Endothelial cell of umbilical vein (primary cell): ENCODE measurements at regions of chr10 and their contacts with region 1.

Region 1: DNA sequence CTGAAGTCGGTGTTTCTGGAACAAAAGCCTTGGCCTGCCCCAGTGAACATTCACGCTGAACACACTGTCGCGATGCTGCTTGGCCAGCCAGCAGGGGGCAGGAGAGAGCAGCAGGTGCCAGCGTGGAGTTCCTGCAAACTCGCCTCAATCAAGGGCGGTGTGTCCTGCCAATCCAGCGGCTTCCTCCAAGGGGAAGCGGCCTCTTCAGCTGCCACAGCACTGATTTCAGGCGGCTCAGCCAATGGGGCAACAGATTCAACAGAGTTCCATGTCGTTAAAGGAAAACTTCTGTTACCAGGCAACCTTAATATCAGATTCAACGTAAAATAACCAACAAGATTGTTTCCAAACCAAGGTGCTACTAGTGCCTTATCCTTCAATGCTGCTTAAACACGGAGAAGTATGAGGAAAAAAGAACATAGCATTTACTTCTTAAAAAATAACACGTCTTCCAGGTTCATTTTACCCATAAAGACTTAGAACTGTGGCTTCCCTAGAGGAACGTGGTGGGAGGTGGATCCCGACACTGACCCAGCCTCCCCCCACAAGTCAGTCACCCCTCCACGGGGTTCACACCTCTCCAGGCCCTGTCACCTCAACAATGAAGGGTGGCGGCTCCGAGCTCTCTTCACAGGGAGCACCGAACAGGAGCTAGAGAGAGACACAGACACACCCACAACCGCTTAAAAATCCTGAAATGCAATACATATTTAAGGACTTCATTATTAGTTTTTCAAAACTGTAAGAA is 178.2 kb downstream of the DIP2C start:
- DNase-seq: peak; percentile 96
- H3K4me3 ChIP-seq: no peak overlapping the region
- H3K27ac ChIP-seq: no peak overlapping the region
- H3K4me1 ChIP-seq: peaks cover 3% of the 10 kb centered on the region
- H3K27me3 ChIP-seq: no peaks in the 10 kb centered on the region
- CTCF ChIP-seq: peak; percentile 98 to 99
- POLR2A ChIP-seq: no peak

Region 2: DNA sequence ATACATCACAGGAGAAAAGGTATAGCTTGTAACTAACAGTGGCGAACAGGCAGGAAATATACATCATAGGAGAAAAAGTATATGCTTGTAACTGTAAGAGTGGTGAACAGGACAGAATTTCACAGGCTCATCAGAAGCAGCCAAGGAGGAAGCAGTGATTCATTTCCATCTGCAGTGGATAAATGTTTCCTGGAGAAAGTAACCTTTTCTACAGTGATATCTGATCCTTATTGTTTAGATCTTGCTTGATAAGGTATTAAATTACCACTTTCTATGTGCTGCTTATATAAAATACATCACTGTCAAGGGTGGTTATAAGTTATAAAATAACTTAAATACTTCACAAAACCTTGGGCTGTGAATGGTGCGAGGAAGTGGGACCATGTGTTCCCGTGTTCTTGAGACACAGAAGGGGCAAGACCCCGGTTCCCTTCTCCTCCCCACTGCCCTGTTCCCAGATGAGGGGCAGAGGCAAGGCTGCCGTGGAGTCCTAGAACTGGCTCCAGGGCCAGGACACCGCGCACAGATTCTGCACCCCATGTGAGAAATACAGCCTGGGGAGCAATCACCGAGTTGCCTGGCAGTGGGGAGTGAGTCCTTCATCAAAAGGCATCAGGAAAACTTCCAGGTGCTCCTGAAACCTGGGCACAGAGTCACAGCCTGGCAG is 43.0 kb after region 1 on chr10:
- CTCF ChIA-PET with region 1: interaction called, 3 read pairs
- POLR2A ChIA-PET with region 1: no interaction called
- dilution Hi-C with region 1: no loop called
- intact Hi-C with region 1: loop called (anchors 2 kb)
- DNase-seq: peak; percentile 63
- H3K4me3 ChIP-seq: no peak overlapping the region
- H3K27ac ChIP-seq: no peak overlapping the region
- H3K4me1 ChIP-seq: peaks cover 13% of the 10 kb centered on the region
- H3K27me3 ChIP-seq: no peaks in the 10 kb centered on the region
- CTCF ChIP-seq: no peak
- POLR2A ChIP-seq: no peak

Region 3: GRCh38 chr10:784403-785088 is 273.3 kb after region 1 on chr10:
- CTCF ChIA-PET with region 1: interaction called, 33 read pairs
- POLR2A ChIA-PET with region 1: no interaction called
- dilution Hi-C with region 1: no loop called
- intact Hi-C with region 1: loop called (anchors 1 kb)
- DNase-seq: peak; percentile 76
- H3K4me3 ChIP-seq: peak overlapping the region in 1 of 3 experiments; percentile 20
- H3K27ac ChIP-seq: no peak overlapping the region
- H3K4me1 ChIP-seq: peaks cover 2% of the 10 kb centered on the region
- H3K27me3 ChIP-seq: no peaks in the 10 kb centered on the region
- CTCF ChIP-seq: peak; percentile 8 to 26
- POLR2A ChIP-seq: no peak

Region 4: GRCh38 chr10:810351-810846 is 299.1 kb after region 1 on chr10:
- CTCF ChIA-PET with region 1: interaction called, 13 read pairs
- POLR2A ChIA-PET with region 1: no interaction called
- dilution Hi-C with region 1: no loop called
- intact Hi-C with region 1: loop called (anchors 1 kb)
- DNase-seq: peak; percentile 23
- H3K4me3 ChIP-seq: no peak overlapping the region
- H3K27ac ChIP-seq: no peak overlapping the region
- H3K4me1 ChIP-seq: no peaks in the 10 kb centered on the region
- H3K27me3 ChIP-seq: no peaks in the 10 kb centered on the region
- CTCF ChIP-seq: peak in 1 of 2 donors; percentile 36
- POLR2A ChIP-seq: no peak